Calu3 (cell line): ENCODE measurements at regions of chr15 and their contacts with region 1.

Region 1: DNA sequence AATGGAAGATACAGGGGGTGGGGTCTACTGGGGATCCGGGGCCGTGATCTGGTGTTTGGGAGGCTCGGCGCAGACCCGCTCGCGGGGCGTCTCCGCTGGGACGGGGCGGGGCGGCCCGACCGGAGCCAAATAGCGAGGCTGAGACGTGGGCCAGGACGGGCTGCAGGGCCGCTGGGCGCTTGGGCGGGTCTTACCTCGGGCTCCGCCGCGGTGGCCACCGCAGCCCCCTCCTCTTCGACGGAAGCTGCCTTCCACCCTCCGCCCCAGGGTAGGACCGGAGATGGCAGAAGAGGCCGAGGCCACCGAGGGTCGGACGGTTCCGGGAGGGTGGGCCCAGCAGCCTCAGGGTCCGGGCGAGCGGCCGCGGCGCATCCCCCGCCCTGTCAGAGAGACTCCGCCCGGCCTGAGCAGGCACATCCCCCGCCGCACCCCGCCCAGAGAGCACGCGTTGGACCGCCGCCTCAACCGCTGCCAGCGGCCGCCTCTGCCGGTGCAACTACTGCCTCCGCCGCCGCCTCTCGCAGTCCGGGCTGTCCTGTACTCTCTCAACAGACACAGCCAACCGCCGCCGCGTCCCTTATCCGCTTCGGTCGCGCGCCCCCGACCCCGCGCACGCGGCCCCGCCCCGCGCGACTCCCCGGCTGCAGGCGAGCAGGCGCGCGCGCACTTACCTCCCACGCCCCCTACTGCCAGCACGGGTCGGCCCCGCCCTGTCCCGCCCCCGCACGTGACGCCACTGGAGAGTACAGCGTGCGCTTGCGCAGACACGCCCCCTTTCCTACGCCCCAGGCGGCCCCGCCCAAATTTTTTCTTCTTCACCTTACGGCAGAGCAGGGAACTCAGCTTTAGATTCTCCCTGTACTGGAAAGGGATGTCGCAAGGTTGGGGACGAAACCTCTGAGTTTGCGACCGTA is at the start of gene MYO9A:
- DNase-seq: peak; percentile 99
- H3K4me3 Mint-ChIP-seq: peak within 1 kb of the TSS; percentile 95
- H3K27ac Mint-ChIP-seq: peak within 1 kb of the TSS; percentile 98
- H3K4me1 Mint-ChIP-seq: peaks cover 60% of the 10 kb centered on the region
- H3K27me3 Mint-ChIP-seq: no peaks in the 10 kb centered on the region
- CTCF ChIP-seq: no peak
- total RNA-seq, gene MYO9A: 31.8 and 32.8 TPM in 2 replicates

Region 2: DNA sequence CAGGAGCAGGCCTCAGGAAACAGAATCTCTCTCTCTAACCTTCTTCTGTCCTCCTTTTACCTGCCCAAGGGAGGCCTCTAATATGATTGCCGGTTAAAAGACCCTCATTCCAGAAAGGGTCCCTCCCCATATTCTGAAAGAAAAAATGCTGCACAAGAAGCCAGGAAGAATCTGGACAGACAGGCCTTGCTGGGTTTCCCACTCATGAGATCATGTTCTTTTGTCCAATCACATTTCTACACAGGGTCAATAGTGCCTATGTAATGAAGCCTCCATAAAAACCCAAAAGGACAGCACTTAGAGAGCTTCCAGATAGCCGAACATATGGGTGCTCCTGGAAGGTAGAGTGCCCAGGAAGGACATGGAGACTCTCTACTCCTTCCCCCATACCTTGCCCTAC is 145.8 kb before region 1 on chr15:
- CTCF ChIA-PET with region 1: interaction called, 5 read pairs
- intact Hi-C with region 1: loop called (anchors 5 kb)
- DNase-seq: peak; percentile 20
- H3K4me3 Mint-ChIP-seq: no peak overlapping the region
- H3K27ac Mint-ChIP-seq: peak overlapping the region; percentile 20
- H3K4me1 Mint-ChIP-seq: peaks cover 52% of the 10 kb centered on the region
- H3K27me3 Mint-ChIP-seq: no peaks in the 10 kb centered on the region
- CTCF ChIP-seq: no peak